Common myeloid progenitor, CD34-positive (primary cell): ENCODE measurements at regions of chr1 and their contacts with region 1.

Region 1: DNA sequence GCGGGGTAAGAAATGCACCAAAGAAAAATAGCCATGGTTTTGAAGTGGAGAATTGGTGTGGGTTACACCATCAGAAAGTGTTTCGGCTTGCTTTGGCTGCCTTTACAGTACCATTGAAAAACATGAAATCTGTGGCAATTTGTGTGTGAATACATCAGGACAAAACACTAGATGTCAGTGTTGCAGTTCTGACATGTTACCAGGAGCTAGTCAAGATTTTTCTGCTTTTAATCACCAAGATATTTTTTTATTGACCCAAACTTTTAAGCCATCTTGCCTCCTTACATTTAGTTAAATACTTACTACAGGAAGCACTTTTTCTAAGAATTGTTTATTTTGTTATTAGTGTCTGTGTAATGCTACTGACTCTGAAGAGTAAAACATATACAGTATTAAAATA is 14.3 kb downstream of the RRP15 start:
- DNase-seq: peak; percentile 45 to 72 (median 67)
- H3K4me3 ChIP-seq: no peak overlapping the region
- H3K27ac ChIP-seq: no peak overlapping the region
- H3K4me1 ChIP-seq: peaks cover 3 to 8% (median 6%) of the 10 kb centered on the region in 4 experiments
- H3K27me3 ChIP-seq: no peaks in the 10 kb centered on the region

Region 2: GRCh38 chr1:218217040-218217439 is 82.4 kb before region 1 on chr1:
- CTCF ChIA-PET with region 1: no interaction called
- POLR2A ChIA-PET with region 1: no interaction called
- DNase-seq: no peak
- H3K4me3 ChIP-seq: no peak overlapping the region
- H3K27ac ChIP-seq: no peak overlapping the region
- H3K4me1 ChIP-seq: no peaks in the 10 kb centered on the region
- H3K27me3 ChIP-seq: peaks cover 0 to 23% (median 5%) of the 10 kb centered on the region in 5 experiments

Region 3: DNA sequence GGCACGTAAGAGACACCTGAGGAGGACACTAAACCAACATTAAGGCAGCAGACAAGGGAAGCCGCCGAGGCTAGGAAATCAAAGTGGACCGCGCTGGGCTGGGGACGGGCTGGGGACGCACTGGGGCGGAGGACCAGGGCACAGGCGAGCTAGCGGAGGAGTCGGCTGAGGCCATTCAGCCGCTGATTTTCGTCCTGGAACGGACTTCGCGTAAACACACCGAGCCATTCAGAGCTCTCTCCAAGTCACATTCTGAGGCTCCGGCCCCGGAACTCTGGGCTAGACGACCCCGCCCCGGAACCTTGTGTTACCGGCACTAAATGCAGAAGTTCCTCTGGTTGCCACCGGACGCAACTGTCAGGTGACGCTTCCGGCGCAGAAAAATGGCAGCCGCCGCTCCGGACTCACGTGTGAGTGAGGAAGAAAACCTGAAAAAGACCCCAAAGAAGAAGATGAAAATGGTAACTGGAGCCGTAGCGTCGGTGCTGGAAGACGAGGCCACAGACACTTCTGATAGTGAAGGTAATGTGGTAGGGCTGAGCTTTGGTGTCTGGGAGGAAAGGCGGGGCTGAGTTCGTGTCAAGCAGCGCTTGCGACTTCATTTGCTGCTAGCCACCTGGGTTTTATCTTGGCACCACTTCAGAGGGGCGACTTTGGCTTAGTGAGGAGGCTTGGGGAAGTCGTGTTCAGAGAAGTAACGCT is 14.3 kb before region 1 on chr1 and contains the start of gene RRP15:
- CTCF ChIA-PET with region 1: interaction called, 10 read pairs
- POLR2A ChIA-PET with region 1: no interaction called
- DNase-seq: peak; percentile 92 to 97 (median 95)
- H3K4me3 ChIP-seq: peak within 1 kb of the TSS; percentile 73 to 99 (median 89)
- H3K27ac ChIP-seq: peak within 1 kb of the TSS; percentile 74 to 90
- H3K4me1 ChIP-seq: peaks cover 10 to 25% (median 15%) of the 10 kb centered on the region in 4 experiments
- H3K27me3 ChIP-seq: peaks cover 0 to 2% (median 0%) of the 10 kb centered on the region in 5 experiments

Region 4: GRCh38 chr1:218323568-218324225 is 24.3 kb after region 1 on chr1:
- CTCF ChIA-PET with region 1: interaction called, 13 read pairs
- POLR2A ChIA-PET with region 1: no interaction called
- DNase-seq: no peak
- H3K4me3 ChIP-seq: no peak overlapping the region
- H3K27ac ChIP-seq: no peak overlapping the region
- H3K4me1 ChIP-seq: no peaks in the 10 kb centered on the region
- H3K27me3 ChIP-seq: no peaks in the 10 kb centered on the region

Region 5: DNA sequence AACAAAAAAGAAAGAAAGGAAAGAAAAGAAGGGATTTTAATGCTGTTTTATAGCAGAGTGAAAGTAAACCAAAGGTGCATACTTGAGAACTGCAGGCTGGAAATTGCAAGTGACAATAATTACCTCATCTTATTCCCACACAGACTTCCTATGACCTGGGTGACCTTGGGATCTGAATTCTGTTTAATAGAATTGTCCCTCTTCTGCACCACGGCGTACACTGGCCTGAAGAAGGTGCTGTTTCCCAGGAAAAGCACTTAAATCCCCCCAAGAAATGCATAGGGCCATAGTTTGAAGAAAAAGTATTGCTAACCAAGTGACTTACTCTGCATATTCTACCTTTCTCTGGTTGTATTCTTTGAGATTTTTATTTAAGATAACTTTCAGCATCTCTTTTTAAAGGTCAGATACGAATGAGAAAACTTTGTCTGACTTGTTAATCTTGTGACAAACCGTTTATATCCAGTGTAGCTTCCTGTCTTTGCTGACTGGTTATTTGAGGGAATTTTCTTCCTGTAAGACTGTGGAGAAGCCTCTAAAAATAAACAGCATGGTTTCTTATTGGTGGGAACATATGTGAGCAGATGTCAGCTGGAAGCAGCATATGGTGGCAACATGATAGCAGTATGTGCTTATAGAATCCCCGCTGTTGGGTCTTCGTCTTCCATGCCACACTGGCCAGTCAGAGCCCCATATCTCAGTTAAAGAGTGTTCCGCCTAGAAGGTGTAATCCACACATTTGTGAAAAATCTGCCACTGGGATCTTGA is 62.1 kb after region 1 on chr1:
- CTCF ChIA-PET with region 1: no interaction called
- POLR2A ChIA-PET with region 1: no interaction called
- DNase-seq: peak in 2 of 3 donors; percentile 40 to 50
- H3K4me3 ChIP-seq: no peak overlapping the region
- H3K27ac ChIP-seq: no peak overlapping the region
- H3K4me1 ChIP-seq: peaks cover 0 to 6% (median under 1%) of the 10 kb centered on the region in 4 experiments
- H3K27me3 ChIP-seq: no peaks in the 10 kb centered on the region

Region 6: DNA sequence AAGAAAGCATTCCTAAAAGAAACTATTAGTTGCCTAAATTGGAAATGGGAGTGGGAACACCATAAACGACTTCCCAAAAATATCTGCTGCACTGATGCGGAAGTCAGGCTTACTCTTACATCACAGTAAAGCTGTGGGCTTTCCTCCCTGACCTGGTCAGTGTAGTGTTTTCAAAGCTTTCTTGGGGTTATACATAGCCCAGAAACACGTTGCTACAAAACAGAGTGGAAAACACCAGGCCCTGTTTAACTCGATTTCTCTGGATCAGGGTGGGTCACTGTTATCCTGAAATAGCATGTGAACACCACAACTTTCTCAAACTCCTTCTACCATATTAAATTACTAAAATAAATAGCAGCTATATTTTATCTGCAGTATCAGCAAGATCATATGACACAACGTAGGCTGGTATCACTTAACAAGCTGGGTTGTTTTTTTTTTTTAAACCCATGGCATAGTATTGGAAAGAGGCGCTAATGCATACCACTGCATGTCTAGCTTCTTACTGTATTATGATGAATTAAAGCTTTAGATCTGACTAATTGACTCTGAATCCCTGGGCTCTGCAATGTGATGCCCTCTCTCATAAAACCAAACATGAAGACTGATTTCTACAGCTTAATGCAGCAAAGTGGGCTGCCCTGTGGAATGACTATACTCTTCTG is 230.4 kb after region 1 on chr1:
- CTCF ChIA-PET with region 1: no interaction called
- POLR2A ChIA-PET with region 1: no interaction called
- DNase-seq: no peak
- H3K4me3 ChIP-seq: no peak overlapping the region
- H3K27ac ChIP-seq: no peak overlapping the region
- H3K4me1 ChIP-seq: no peaks in the 10 kb centered on the region
- H3K27me3 ChIP-seq: peaks cover 0 to 4% (median 0%) of the 10 kb centered on the region in 5 experiments